HepG2 (cell line): ENCODE measurements at regions of chr16 and their contacts with region 1.

Region 1: DNA sequence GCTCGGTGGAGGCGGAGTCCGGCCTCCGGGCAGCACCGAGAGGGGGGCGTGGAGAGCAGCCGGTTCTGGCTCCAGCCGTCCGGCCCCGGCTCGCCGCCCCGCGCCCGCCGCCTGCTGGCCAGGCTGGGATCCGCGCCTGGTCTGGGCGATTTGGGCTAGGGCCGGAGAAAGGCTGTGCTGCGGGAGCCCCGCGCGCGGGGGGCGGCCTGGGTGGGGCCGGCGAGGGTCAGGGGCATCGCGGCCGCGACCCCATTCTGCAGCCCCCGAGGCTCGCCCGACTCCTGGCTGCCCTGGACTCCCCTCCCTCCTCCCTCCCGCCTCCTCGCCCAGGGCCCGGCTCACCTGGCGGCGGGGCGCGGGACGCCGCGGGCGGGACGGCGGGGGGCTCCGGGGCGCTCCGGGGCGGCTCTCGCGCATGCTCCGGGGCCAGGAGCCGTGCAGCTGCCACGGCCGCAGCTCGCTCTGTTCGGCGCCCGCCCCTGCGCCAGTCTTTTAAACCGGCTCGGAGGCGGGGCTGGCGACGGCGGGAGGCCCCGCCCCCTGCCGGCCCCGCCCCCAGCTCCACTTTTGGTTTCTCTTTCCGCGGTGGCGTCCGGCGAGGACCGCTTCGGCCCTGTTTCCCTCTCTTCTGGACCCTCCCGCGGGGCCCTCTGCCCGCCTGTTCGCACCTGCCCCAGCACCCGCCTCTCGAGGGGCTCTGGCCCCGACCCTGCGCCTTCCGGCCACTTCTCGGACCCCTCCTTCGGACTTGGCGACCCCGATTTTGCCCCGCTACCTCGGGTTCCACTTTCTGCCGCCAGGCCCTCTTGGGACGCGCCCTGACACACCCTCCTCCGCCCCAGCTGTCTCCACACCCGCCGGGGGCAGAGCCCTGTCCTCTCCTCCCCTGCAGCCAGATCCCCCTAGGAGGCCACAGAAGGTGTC is at the start of gene SOCS1:
- DNase-seq: peak; percentile 78
- ATAC-seq: peak; percentile 69
- H3K4me3 ChIP-seq: peak within 1 kb of the TSS; percentile 87 to 98 (median 95)
- H3K27ac ChIP-seq: peak within 1 kb of the TSS; percentile 93
- H3K4me1 ChIP-seq: peaks cover 83% of the 10 kb centered on the region
- H3K27me3 ChIP-seq: no peaks in the 10 kb centered on the region; a peak in 2 of 5 replicates
- CTCF ChIP-seq: peak; percentile 81
- EP300 ChIP-seq: 0 out of 4 replicates have a peak, but pooled peaks of 1 of the 2 experiments have one; percentile 16
- POLR2A ChIP-seq: peak in 1 of 2 experiments; percentile 99; a peak in 2 of 4 replicates
- RAD21 ChIP-seq: peak; percentile 99
- total RNA-seq, gene SOCS1: 3.3 and 5.3 TPM in 2 replicates

Region 2: DNA sequence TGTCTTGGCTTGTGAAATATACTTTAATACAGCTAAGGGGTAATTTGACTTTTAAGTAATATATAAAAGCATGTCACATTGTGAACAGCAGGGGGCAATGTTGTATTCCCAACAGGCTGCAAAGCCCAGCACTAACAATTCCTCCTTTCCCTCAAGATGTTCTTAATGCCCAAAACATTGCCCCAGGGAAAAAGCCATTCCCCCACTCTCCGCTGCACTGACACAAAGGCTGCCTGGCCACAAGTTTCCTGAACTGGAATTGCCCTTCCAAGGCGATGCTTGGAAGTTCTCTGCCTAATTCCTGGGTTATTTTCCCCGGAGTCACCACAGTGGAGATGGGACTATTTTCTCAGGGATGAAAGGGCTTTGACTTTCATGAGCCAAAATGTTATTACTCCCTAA is 284.4 kb before region 1 on chr16:
- CTCF ChIA-PET with region 1: interaction called, 35 read pairs
- POLR2A ChIA-PET with region 1: interaction called, 24 read pairs
- in situ Hi-C with region 1: loop called (anchors 5 kb)
- intact Hi-C with region 1: loop called (anchors 1 kb)
- DNase-seq: peak; percentile 70
- ATAC-seq: peak; percentile 70
- H3K4me3 ChIP-seq: no peak overlapping the region
- H3K27ac ChIP-seq: no peak overlapping the region
- H3K4me1 ChIP-seq: peaks cover 9% of the 10 kb centered on the region
- H3K27me3 ChIP-seq: no peaks in the 10 kb centered on the region; a peak in 1 of 5 replicates
- CTCF ChIP-seq: peak; percentile 88
- EP300 ChIP-seq: no peak
- POLR2A ChIP-seq: no peak
- RAD21 ChIP-seq: peak; percentile 85

Region 3: GRCh38 chr16:11205754-11206581 is 50.0 kb before region 1 on chr16:
- CTCF ChIA-PET with region 1: no interaction called
- POLR2A ChIA-PET with region 1: interaction called, 22 read pairs
- in situ Hi-C with region 1: no loop called
- intact Hi-C with region 1: no loop called
- DNase-seq: peak; percentile 53
- ATAC-seq: peak; percentile 73
- H3K4me3 ChIP-seq: peak overlapping the region in 1 of 3 experiments; percentile 38; a peak in 2 of 6 replicates
- H3K27ac ChIP-seq: no peak overlapping the region
- H3K4me1 ChIP-seq: peaks cover 46% of the 10 kb centered on the region
- H3K27me3 ChIP-seq: peaks cover 4 to 47% of the 10 kb centered on the region in 2 experiments
- CTCF ChIP-seq: 0 out of 2 replicates have a peak, but pooled peaks have one; percentile 1
- EP300 ChIP-seq: peak in 1 of 2 experiments; percentile 7; a peak in 1 of 4 replicates
- POLR2A ChIP-seq: no peak
- RAD21 ChIP-seq: no peak; the same call in 1 of the 2 replicates

Region 4: DNA sequence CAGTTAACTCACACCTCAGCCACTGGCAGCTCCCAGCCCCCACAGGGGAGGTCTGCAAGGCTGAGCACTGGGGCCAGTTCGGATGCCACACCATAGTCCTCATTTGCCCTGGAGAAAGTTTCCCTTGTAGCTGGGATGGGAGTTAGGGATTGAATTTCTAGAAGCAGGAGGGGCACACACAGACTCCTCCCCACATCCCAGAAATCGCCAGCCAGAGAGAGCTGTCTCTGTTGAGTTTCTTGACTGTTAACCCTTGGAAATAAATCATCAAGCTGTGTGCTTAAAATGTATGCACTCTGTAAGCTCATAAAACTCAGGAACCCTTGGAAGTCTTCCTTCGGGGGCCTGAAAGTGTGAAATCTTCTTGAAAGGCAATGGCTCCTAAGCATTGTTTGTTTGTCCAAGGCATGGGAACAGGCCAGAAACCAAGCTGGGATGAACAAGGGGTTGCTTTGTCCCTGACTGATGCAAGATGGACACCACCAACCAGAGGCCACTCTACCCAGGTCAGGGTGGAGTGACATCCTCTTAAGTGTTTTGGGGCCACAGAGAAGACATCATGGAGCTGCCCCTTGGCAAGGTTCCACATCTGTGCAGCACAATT is 17.8 kb after region 1 on chr16:
- CTCF ChIA-PET with region 1: no interaction called
- POLR2A ChIA-PET with region 1: interaction called, 351 read pairs
- in situ Hi-C with region 1: no loop called
- intact Hi-C with region 1: loop called (anchors 2 kb)
- DNase-seq: peak; percentile 91
- ATAC-seq: peak; percentile 60
- H3K4me3 ChIP-seq: no peak overlapping the region
- H3K27ac ChIP-seq: peak overlapping the region; percentile 81
- H3K4me1 ChIP-seq: peaks cover 92% of the 10 kb centered on the region
- H3K27me3 ChIP-seq: no peaks in the 10 kb centered on the region
- CTCF ChIP-seq: no peak
- EP300 ChIP-seq: peak; percentile 11 to 68; a peak in 2 of 4 replicates
- POLR2A ChIP-seq: peak in 1 of 2 experiments; percentile 27; a peak in 1 of 4 replicates
- RAD21 ChIP-seq: 0 out of 2 replicates have a peak, but pooled peaks have one; percentile 22

Region 5: GRCh38 chr16:11312718-11313492 is 56.9 kb after region 1 on chr16:
- CTCF ChIA-PET with region 1: no interaction called
- POLR2A ChIA-PET with region 1: interaction called, 234 read pairs
- in situ Hi-C with region 1: no loop called
- intact Hi-C with region 1: loop called (anchors 2 kb)
- DNase-seq: peak; percentile 72
- ATAC-seq: no peak
- H3K4me3 ChIP-seq: peak overlapping the region; percentile 4 to 49 (median 34); a peak in 4 of 6 replicates
- H3K27ac ChIP-seq: peak overlapping the region; percentile 88
- H3K4me1 ChIP-seq: peaks cover 73% of the 10 kb centered on the region
- H3K27me3 ChIP-seq: no peaks in the 10 kb centered on the region
- CTCF ChIP-seq: no peak; the same call in 1 of the 2 replicates
- EP300 ChIP-seq: 0 out of 4 replicates have a peak, but pooled peaks of 1 of the 2 experiments have one; percentile 18
- POLR2A ChIP-seq: peak; percentile 11 to 46
- RAD21 ChIP-seq: no peak

Region 6: DNA sequence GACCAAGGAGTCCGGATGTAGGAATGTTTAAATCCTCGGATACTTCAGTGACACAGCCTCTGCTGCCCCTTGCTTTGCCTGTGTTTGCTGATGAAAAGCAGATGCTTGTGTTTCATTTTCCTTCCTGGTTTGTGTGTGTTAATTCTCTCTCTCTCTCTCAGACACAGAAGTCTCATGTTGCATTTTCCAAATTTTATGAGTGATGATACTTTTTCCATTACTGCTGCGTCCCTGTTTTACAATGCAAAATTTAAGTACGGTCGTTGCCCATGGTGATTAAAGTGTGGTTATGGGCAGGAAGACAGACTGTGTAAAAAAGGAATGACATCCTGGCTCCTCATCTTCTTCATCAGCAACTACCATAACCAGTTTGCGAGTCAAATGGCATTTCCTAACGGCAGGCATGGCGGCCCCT is 94.9 kb after region 1 on chr16:
- CTCF ChIA-PET with region 1: interaction called, 38 read pairs
- POLR2A ChIA-PET with region 1: interaction called, 54 read pairs
- in situ Hi-C with region 1: loop called (anchors 5 kb)
- intact Hi-C with region 1: loop called (anchors 1 kb)
- DNase-seq: no peak
- ATAC-seq: no peak
- H3K4me3 ChIP-seq: no peak overlapping the region
- H3K27ac ChIP-seq: no peak overlapping the region
- H3K4me1 ChIP-seq: peaks cover 62% of the 10 kb centered on the region
- H3K27me3 ChIP-seq: no peaks in the 10 kb centered on the region
- CTCF ChIP-seq: no peak
- EP300 ChIP-seq: no peak
- POLR2A ChIP-seq: no peak
- RAD21 ChIP-seq: no peak

Region 7: DNA sequence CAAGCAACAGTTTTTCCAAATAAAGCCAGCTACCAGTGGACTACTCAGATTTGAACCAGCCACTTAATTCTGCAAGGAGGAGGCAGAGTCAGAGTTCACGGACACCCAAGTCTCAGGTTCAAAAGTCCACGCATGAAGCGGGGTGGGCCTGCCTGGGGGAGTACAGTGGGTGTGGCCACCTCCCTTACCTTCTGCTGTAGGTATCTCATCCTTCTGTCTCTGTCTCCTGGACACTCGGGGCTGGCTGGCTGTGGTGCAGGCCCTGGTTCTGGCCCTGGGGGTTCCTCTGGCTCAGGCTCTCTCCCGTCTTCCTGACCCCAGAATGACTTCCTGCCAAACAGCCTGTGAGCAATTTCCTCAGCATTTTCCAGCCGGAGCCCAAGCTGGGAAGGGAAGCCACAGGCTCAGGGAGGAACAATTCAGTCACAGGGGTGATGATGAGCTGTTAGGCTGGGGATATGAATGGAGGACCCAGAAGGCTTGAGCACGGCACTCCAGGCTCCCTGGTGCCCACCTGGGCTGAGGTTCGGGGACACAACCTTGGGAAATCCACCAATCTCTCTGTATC is 228.8 kb after region 1 on chr16:
- CTCF ChIA-PET with region 1: no interaction called
- POLR2A ChIA-PET with region 1: no interaction called
- in situ Hi-C with region 1: no loop called
- intact Hi-C with region 1: no loop called
- DNase-seq: no peak
- ATAC-seq: peak; percentile 26; the same call in 2 of the 3 replicates
- H3K4me3 ChIP-seq: no peak overlapping the region
- H3K27ac ChIP-seq: no peak overlapping the region
- H3K4me1 ChIP-seq: peaks cover 39% of the 10 kb centered on the region
- H3K27me3 ChIP-seq: no peaks in the 10 kb centered on the region
- CTCF ChIP-seq: no peak
- EP300 ChIP-seq: no peak
- POLR2A ChIP-seq: no peak
- RAD21 ChIP-seq: no peak

Region 8: GRCh38 chr16:11742539-11743307 is 486.7 kb after region 1 on chr16 and contains the start of gene TXNDC11:
- CTCF ChIA-PET with region 1: no interaction called
- POLR2A ChIA-PET with region 1: interaction called, 12 read pairs
- in situ Hi-C with region 1: no loop called
- intact Hi-C with region 1: no loop called
- DNase-seq: peak; percentile 98
- ATAC-seq: peak; percentile 88
- H3K4me3 ChIP-seq: peak within 1 kb of the TSS; percentile 75 to 98 (median 97)
- H3K27ac ChIP-seq: peak within 1 kb of the TSS; percentile 94
- H3K4me1 ChIP-seq: peaks cover 84% of the 10 kb centered on the region
- H3K27me3 ChIP-seq: no peaks in the 10 kb centered on the region; a peak in 1 of 5 replicates
- CTCF ChIP-seq: no peak; the same call in 1 of the 2 replicates
- EP300 ChIP-seq: peak in 1 of 2 experiments; percentile 63
- POLR2A ChIP-seq: peak; percentile 96 to 98
- RAD21 ChIP-seq: peak; percentile 89
- total RNA-seq, gene TXNDC11: 46.4 and 74.9 TPM in 2 replicates